ENCODE measurements at regions of chr5 and their contacts with region 1.

Region 1: GRCh38 chr5:43019614-43020293 is 20.4 kb downstream of the ANXA2R start:
- DNase-seq: peak; percentile 68 to 94 (median 86)
- ATAC-seq: peak; percentile 65 to 67
- H3K4me3 Mint-ChIP-seq: peak overlapping the region; percentile 94 to 99 (median 98)
- H3K27ac Mint-ChIP-seq: peak overlapping the region; percentile 97 to 100 (median 100)
- H3K4me1 Mint-ChIP-seq: peaks cover 19 to 44% (median 40%) of the 10 kb centered on the region in 4 donors
- H3K27me3 Mint-ChIP-seq: no peaks in the 10 kb centered on the region

Region 2: DNA sequence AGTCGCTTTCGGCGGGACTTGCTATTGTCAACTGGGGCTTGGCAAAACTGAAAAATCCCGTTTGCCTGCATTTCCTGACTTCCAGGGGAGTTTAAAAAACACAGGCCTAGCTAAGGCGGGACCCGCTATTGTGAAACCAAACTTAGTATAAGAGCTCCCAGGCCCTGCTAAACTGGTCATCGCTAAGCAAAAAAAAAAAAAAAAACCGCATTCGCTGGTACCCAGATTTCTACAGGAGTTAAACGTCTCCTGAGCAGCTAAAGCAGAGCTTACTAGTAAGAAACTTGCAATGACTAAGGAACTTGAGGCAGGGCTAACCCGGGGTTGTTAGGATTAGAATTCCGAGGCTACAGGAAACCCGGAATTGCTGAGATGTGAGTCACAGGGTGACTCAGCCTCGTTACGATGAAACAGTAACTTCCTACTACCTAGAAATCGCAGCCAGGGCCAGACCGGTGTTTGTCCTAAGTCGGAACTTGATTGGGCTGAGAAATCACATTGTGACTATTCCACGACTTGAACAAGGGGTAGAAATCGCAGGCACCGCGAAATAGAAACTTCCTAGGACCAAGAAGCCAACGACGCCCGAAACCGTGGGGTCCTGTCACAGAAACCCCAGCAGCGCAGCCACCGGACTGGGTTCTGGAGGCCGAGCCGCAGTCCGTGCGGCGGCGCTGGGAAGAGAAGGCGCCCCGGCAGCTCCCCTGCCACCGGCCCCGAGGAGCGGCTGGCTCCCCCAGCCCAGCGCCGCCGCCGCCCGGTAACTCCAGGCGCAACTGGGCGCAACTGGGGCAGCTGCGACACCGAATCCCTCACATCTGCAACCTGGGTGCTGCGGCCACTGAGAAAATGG is 69.1 kb before region 1 on chr5:
- POLR2A ChIA-PET with region 1: interaction called, 168 read pairs
- DNase-seq: peak in 8 of 10 donors; percentile 27 to 72 (median 54)
- ATAC-seq: peak; percentile 8 to 37
- H3K4me3 Mint-ChIP-seq: peak overlapping the region; percentile 91 to 99 (median 96)
- H3K27ac Mint-ChIP-seq: peak overlapping the region; percentile 99 to 100 (median 100)
- H3K4me1 Mint-ChIP-seq: peaks cover 13 to 36% (median 26%) of the 10 kb centered on the region in 4 donors
- H3K27me3 Mint-ChIP-seq: no peaks in the 10 kb centered on the region

Region 3: DNA sequence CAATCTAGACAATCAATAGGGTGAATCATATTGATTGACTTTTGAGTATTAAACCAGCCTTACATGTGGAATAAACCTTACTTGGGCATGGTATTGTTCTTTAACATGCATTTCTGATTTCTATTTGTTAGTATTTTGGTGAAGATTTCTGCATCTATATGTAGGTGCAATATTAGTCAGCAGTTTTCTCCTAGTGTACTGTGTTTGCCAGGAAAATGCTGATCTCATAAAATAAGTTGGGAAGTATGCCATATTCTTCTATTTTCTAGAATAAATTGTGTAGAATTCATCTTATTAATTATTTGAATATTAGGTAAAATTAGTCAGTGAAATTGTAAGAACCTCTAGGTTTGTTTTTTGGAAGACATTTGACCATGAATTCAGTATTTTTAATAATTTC is 18.0 kb before region 1 on chr5:
- POLR2A ChIA-PET with region 1: interaction called, 775 read pairs
- DNase-seq: no peak
- ATAC-seq: no peak
- H3K4me3 Mint-ChIP-seq: no peak overlapping the region
- H3K27ac Mint-ChIP-seq: no peak overlapping the region
- H3K4me1 Mint-ChIP-seq: peaks cover 6 to 26% (median 9%) of the 10 kb centered on the region in 4 donors
- H3K27me3 Mint-ChIP-seq: peaks cover 0 to 12% (median 0%) of the 10 kb centered on the region in 5 donors

Region 4: DNA sequence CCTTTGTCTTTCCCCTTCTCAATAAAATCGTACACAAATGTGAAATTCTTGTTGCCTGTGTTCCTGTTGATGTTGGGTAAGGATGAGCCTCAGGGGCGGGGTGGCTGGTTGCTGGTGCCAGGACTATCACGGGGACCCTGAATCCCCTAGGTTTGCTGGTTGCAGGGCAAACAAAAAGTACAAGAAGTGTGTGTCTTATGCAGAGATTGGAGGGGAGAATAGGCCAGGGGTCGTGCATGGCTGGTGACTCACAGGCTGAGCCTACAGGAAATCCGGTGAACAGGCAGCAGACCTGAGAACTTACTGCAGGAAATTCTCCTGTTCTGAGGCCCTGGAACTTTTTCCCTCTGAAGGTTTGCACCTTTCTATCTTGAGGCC is 14.8 kb after region 1 on chr5:
- POLR2A ChIA-PET with region 1: interaction called, 904 read pairs
- DNase-seq: peak in 2 of 10 donors; percentile 24 to 28
- ATAC-seq: peak in 1 of 2 donors; percentile 15
- H3K4me3 Mint-ChIP-seq: peak overlapping the region in 9 of 10 donors; percentile 57 to 95 (median 68)
- H3K27ac Mint-ChIP-seq: peak overlapping the region; percentile 49 to 99 (median 92)
- H3K4me1 Mint-ChIP-seq: peaks cover 14 to 59% (median 57%) of the 10 kb centered on the region in 4 donors
- H3K27me3 Mint-ChIP-seq: no peaks in the 10 kb centered on the region